ENCODE measurements at regions of chr2 and their contacts with region 1.

Region 1: DNA sequence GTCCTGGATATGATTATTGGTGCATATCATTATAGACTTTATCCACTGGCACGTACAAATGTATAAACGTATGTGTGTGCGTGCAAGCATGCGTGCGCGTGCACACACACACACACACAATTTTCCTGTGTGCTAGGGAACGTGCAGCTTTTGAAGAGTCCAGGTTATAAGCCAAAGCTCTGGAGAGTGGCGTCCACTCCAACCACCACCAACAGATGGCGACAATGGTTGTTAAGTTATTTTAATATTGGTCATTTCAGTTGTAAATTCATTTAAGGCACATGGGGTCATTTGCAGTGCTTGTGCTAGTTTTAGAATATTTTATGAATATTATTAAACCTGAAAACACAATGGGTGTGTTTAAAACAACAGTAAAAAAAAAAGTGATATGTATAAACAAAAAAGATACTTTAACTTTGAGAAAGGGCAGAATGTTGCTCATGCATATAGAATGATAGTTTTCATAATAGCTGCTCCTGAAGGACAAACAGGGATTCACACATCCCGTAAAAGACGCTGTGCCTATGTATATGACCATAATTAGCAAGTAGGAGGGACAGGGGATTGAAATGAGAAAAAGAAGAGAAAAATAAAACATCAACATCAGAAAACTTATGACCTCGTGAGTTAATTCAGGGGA is 124.2 kb upstream of the ITGB6 start:
- DNase-seq: peak; percentile 69
- H3K4me3 Mint-ChIP-seq: no peak overlapping the region
- H3K27ac Mint-ChIP-seq: no peak overlapping the region
- H3K4me1 Mint-ChIP-seq: peaks cover 78% of the 10 kb centered on the region
- H3K27me3 Mint-ChIP-seq: no peaks in the 10 kb centered on the region

Region 2: GRCh38 chr2:160252278-160252887 is 71.9 kb before region 1 on chr2:
- CTCF ChIA-PET with region 1: interaction called, 16 read pairs
- intact Hi-C with region 1: no loop called
- DNase-seq: no peak
- H3K4me3 Mint-ChIP-seq: no peak overlapping the region
- H3K27ac Mint-ChIP-seq: no peak overlapping the region
- H3K4me1 Mint-ChIP-seq: no peaks in the 10 kb centered on the region
- H3K27me3 Mint-ChIP-seq: peaks cover 6% of the 10 kb centered on the region

Region 3: GRCh38 chr2:160294339-160294803 is 29.9 kb before region 1 on chr2:
- CTCF ChIA-PET with region 1: interaction called, 14 read pairs
- intact Hi-C with region 1: loop called (anchors 1 kb)
- DNase-seq: peak; percentile 59
- H3K4me3 Mint-ChIP-seq: no peak overlapping the region
- H3K27ac Mint-ChIP-seq: peak overlapping the region; percentile 67
- H3K4me1 Mint-ChIP-seq: peaks cover 80% of the 10 kb centered on the region
- H3K27me3 Mint-ChIP-seq: no peaks in the 10 kb centered on the region

Region 4: DNA sequence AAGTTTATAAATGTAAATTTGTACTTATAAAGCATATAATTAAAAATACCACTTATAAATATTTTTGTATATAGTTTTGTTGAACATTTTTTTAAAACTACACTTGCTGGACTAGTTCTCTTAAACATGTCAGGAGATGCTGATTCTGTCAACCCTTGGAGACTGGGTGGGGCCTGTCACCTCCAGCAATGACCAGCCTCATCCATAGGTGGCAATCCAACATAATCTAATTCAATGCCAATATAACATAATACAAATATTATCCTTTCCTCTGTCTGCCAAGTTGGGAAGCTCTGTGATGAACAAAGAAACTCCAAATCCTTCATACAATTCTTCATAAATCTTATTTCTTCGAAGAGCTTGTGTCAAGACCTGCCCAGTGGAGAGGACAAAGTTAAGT is 28.9 kb after region 1 on chr2:
- CTCF ChIA-PET with region 1: interaction called, 30 read pairs
- intact Hi-C with region 1: no loop called
- DNase-seq: peak; percentile 59
- H3K4me3 Mint-ChIP-seq: no peak overlapping the region
- H3K27ac Mint-ChIP-seq: no peak overlapping the region
- H3K4me1 Mint-ChIP-seq: peaks cover 66% of the 10 kb centered on the region
- H3K27me3 Mint-ChIP-seq: no peaks in the 10 kb centered on the region

Region 5: GRCh38 chr2:160429248-160430000 is 105.1 kb after region 1 on chr2:
- CTCF ChIA-PET with region 1: interaction called, 21 read pairs
- intact Hi-C with region 1: no loop called
- DNase-seq: no peak
- H3K4me3 Mint-ChIP-seq: peak overlapping the region; percentile 47
- H3K27ac Mint-ChIP-seq: peak overlapping the region; percentile 88
- H3K4me1 Mint-ChIP-seq: peaks cover 49% of the 10 kb centered on the region
- H3K27me3 Mint-ChIP-seq: no peaks in the 10 kb centered on the region

Region 6: GRCh38 chr2:160918906-160919503 is 594.7 kb after region 1 on chr2:
- CTCF ChIA-PET with region 1: interaction called, 6 read pairs
- intact Hi-C with region 1: loop called (anchors 2 kb)
- DNase-seq: peak; percentile 58
- H3K4me3 Mint-ChIP-seq: no peak overlapping the region
- H3K27ac Mint-ChIP-seq: no peak overlapping the region
- H3K4me1 Mint-ChIP-seq: no peaks in the 10 kb centered on the region
- H3K27me3 Mint-ChIP-seq: no peaks in the 10 kb centered on the region

Measured in activated naive CD4-positive, alpha-beta T cell treated with anti-CD3 and anti-CD28 coated beads for 36 hours (primary cell).